Activated CD8-positive, alpha-beta memory T cell treated with anti-CD3 and anti-CD28 coated beads, Interleukin-2, amount 10 ng/mL, durations not matched to agents 7 days and 5 days (primary cell): ENCODE measurements at regions of chr11 and their contacts with region 1.

Region 1: GRCh38 chr11:11966826-11967668 is 41.4 kb downstream of the DKK3 start:
- DNase-seq: peak; percentile 87
- ATAC-seq: peak; percentile 98
- H3K4me3 Mint-ChIP-seq: no peak overlapping the region
- H3K27ac Mint-ChIP-seq: no peak overlapping the region
- H3K4me1 Mint-ChIP-seq: peaks cover 3% of the 10 kb centered on the region
- H3K27me3 Mint-ChIP-seq: peaks cover 9% of the 10 kb centered on the region

Region 2: DNA sequence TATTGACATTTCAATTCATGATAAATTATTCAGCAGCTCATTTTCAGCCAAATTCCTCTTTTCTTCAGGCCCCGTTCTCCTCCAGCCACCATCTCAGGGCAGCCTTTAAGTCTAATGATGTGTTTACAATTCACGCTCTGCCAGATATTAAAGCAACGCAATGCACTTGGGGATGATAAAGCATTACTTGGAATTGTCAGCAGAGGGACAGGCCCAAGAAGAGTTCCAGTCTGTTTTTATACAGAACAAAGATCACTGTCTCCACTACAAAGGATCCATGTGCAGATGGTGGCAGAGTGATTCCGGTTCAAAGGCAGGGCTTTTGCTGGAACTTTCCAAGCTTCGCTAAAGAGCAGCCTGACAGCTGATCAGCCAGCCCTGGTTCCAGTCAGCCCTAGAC is 331.6 kb before region 1 on chr11:
- CTCF ChIA-PET with region 1: no interaction called
- DNase-seq: no peak
- ATAC-seq: no peak
- H3K4me3 Mint-ChIP-seq: no peak overlapping the region
- H3K27ac Mint-ChIP-seq: no peak overlapping the region
- H3K4me1 Mint-ChIP-seq: no peaks in the 10 kb centered on the region
- H3K27me3 Mint-ChIP-seq: peaks cover 20% of the 10 kb centered on the region

Region 3: GRCh38 chr11:11946180-11946579 is 20.9 kb before region 1 on chr11:
- CTCF ChIA-PET with region 1: interaction called, 14 read pairs
- DNase-seq: no peak
- ATAC-seq: no peak
- H3K4me3 Mint-ChIP-seq: no peak overlapping the region
- H3K27ac Mint-ChIP-seq: no peak overlapping the region
- H3K4me1 Mint-ChIP-seq: no peaks in the 10 kb centered on the region
- H3K27me3 Mint-ChIP-seq: no peaks in the 10 kb centered on the region

Region 4: GRCh38 chr11:11977206-11977938 is 10.3 kb after region 1 on chr11:
- CTCF ChIA-PET with region 1: interaction called, 12 read pairs
- DNase-seq: peak; percentile 7
- ATAC-seq: no peak
- H3K4me3 Mint-ChIP-seq: no peak overlapping the region
- H3K27ac Mint-ChIP-seq: no peak overlapping the region
- H3K4me1 Mint-ChIP-seq: peaks cover 9% of the 10 kb centered on the region
- H3K27me3 Mint-ChIP-seq: peaks cover 2% of the 10 kb centered on the region